ENCODE measurements at regions of chr12 and their contacts with region 1.

Region 1: DNA sequence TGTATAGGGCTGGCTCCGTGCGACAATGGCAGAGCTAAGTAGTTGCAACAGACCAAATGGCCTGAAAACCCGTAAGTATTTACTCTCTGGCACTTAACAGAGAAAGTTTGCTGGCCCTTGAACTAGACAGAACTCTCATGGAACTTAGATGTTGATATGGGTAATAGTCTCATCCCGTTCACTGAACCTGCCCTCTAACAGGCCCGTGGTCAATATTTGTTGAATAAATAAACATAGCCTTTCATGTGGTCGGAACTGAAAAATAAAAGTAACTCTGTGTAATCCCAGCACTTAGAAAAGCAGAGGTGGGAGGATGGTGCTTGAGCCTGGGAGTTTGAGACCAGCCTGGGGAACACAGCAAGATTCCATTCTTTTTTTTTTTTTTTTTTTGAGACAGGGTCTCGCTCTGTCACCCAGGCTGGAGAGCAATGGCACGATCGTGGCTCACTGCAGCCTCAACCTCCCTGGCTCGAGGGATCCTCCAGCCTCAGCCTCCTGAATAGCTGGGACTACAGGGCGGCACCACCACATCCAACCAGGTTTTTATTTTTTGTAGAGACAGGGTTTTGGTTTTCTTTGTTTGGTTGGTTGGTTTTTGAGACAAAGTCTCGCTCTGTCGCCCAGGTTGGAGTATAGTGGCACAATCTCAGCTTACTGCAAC is 29.7 kb downstream of the KDM2B start:
- DNase-seq: no peak

Region 2: DNA sequence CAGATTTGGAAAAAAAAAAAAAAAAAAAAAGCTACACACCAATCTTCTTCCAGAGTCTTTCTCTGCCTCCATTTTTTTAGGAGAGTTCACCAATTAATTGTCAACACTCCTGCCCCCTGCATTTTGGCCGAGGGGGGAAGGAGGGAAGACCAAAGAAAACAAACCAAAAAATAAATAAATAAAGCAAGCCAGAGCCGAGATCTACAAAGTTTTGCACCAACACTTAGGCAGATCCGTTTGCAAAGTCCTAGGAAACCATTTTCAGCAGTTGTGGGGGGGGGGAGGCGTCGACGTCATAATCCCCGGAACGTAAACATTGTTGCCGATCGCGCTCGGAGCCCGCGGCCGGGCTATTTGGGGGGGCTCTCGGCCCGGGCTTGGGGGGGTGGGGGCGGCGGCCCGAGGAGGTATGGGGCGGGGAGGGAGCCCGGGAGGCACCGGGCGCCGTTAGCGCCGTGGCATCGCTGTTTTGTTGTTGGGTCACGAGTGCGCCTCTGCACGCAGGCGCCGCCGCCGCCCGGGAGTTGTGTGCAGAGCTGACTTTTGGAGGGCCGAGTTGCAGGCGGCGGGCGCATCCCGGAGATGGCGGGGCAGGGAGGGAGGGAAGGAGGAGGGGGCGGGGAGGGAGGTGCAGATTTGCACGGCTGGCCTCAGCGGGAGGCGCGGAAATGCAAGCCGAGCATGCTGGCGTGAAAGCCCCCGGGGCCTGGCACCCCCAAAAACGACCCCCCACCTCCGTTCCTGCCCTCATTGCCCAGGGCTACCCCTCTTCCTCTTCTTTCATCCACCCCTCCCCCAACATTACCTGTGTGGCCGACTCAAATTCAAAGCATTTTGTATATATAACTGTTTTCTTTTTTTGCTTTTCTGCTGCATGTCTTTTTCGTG is 29.1 kb after region 1 on chr12:
- intact Hi-C with region 1: loop called in 1 of 2 experiments (anchors 1 kb)
- DNase-seq: peak; percentile 91

Region 3: GRCh38 chr12:121608301-121608700 is 57.2 kb after region 1 on chr12:
- intact Hi-C with region 1: no loop called
- DNase-seq: no peak

Region 4: GRCh38 chr12:121620328-121620891 is 69.3 kb after region 1 on chr12:
- intact Hi-C with region 1: loop called (anchors 5 to 10 kb)
- DNase-seq: no peak

Region 5: DNA sequence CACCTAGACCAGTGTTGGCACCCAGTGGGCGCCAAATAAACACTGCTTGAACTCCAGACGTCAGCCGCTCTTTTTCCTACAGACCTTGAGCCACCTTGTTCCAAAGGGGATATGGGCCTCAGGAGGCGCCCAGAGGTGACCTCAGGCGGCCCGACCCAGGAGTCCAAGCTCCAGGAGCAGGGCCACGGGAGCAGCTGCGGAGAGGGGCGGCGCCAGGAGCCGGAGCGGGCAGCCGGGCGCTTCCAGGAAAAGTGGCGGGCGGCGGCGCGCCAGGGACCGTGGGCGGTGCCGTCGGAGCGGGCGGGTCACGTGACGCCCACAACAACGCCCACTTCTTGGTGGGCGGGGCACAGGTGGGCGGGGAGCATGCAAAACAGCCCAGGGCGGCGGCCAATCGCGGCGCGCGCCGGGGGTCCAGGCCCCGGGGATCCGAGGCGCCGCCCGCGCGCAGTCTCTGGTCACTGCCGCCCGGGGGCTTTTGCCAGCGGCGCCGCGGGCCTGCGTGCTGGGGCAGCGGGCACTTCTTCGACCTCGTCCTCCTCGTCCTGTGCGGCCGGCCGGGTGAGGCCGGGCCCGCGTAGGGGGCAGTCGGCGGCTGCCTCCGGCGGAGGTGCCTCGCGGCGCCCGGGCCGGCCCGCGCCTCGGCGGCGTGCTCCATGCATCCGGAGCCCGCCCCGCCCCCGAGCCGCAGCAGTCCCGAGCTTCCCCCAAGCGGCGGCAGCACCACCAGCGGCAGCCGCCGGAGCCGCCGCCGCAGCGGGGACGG is 75.2 kb after region 1 on chr12 and contains the start of gene ORAI1:
- intact Hi-C with region 1: loop called (anchors 5 to 10 kb)
- DNase-seq: peak; percentile 99
- total RNA-seq, gene ORAI1: 10.5 to 13.1 TPM

Region 6: DNA sequence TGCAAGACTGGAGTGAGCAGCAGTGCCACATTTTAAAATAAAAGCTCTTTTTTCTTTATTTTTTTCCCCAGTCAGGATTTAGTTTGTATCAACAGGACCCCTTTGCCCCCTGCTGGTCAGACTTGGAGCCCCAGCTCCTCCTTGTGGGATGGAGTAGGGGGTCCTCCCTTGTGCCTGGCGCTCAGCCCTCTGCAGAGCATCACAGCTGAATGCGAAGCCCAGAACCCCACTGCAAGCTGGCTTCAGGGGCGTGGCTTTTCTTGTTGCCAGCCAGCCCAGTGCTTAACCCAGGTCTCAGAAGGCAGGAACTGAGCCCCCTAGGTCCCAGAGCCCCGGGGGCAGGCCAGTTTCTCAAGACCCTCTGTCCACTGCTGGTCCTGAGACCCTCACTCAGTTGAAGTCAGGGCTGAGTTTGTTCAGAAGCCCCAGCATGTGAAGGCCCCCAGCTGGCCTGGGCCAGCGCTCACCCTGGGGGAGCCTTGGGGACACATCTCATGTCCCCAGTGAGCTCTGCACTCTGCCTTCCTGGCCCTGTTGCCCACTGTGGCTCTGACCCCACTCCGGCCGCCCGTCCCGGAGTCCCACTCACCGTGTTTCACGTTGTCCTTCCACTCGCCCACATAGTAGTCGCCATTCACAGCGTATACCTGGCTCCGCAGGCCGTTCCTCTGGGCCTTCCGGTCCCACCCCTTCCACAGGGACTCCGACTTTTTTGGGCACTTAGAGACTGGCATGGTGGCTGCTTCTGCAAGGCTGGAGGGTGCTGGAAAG is 117.8 kb after region 1 on chr12:
- intact Hi-C with region 1: loop called in 1 of 2 experiments (anchors 5 kb)
- DNase-seq: no peak

Region 7: GRCh38 chr12:121678716-121679580 is 127.8 kb after region 1 on chr12:
- intact Hi-C with region 1: loop called (anchors 2 to 5 kb)
- DNase-seq: no peak

Region 8: DNA sequence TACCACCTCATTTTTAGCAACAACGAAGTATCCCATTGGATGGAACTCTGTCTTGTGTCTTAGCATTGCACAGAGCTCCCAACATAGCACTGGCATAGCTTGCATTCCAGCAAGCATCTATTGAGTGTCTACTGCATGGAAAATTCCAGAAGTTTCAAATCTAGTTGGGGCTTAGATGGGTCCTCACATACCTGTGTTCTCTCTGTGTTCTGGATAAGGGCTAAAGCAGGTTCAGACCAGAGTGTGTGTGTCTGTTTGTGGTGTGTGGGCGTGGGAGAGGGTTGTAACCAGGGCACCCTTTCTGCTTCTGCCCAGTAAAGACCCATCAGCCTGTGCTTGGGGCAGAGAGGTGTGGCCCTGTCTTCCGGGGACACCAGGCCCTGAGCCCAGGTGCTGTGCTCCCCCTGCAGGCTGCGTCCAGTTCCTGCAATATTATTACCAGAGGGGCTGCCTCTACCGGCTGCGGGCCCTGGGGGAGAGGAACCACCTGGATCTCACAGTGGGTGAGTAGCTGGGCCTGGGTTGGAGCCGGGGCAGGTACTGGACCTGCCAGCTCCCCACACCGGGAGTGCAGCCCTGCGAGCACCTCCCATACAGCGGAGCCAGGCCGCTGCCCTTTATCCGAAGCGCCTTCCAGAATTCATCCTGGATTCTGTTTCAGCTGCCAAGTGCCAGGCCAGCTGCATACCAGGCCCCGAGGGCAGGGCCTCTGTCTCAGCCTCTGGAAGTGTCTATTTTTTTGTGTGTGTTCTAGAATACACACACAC is 222.1 kb after region 1 on chr12:
- intact Hi-C with region 1: loop called in 1 of 2 experiments (anchors 5 kb)
- DNase-seq: peak; percentile 88